Ascending aorta (tissue), 2 donors: ENCODE measurements at regions of chr19 and their contacts with region 1.

Region 1: GRCh38 chr19:55516878-55517620 is 19.9 kb downstream of the SBK2 start:
- DNase-seq: peak; percentile 47 to 96
- H3K4me3 ChIP-seq: peak overlapping the region; percentile 49 to 57
- H3K27ac ChIP-seq: peak overlapping the region; percentile 36 to 74
- H3K4me1 ChIP-seq: peaks cover 0 to 12% of the 10 kb centered on the region in 2 donors
- H3K27me3 ChIP-seq: no peaks in the 10 kb centered on the region
- CTCF ChIP-seq: peak; percentile 83 to 95 (median 95)

Region 2: GRCh38 chr19:55549500-55550320 is 32.7 kb after region 1 on chr19:
- intact Hi-C with region 1: loop called (anchors 1 kb)
- DNase-seq: peak in 1 of 2 donors; percentile 77
- H3K4me3 ChIP-seq: peak overlapping the region; percentile 30 to 45
- H3K27ac ChIP-seq: peak overlapping the region; percentile 61 to 70
- H3K4me1 ChIP-seq: peaks cover 5 to 33% of the 10 kb centered on the region in 2 donors
- H3K27me3 ChIP-seq: no peaks in the 10 kb centered on the region
- CTCF ChIP-seq: no peak

Region 3: DNA sequence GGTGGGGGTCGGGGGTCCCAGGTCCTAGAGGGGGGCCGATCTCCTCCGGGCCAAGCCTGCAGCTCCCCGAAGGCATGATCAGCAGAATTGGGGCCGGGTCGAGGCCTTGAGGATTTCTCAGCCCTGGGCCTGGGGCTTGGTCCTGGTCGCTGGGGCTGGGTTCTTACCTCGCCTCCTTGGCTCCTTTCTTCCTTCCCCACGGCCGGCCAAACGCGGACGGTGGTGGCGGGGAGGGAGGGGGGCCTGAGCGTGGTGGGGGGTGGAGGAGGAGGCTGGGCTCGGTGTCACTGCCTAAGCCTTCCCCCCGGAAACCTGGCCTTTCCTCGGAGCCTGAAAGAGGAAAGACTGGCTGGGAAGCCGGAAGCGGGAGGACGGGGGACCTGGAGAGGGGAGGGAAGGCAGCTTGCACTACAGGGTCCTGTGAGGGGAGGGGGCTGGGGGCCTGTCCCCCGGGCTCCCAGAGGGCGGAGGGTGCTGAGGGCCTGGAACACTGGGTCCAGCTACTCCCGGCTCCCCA is 63.6 kb after region 1 on chr19 and contains the start of gene ZNF579:
- intact Hi-C with region 1: loop called (anchors 1 kb)
- DNase-seq: peak; percentile 32 to 89
- H3K4me3 ChIP-seq: peak within 1 kb of the TSS; percentile 67 to 85
- H3K27ac ChIP-seq: peak within 1 kb of the TSS; percentile 89 to 92
- H3K4me1 ChIP-seq: peaks cover 2 to 8% of the 10 kb centered on the region in 2 donors
- H3K27me3 ChIP-seq: no peaks in the 10 kb centered on the region
- CTCF ChIP-seq: no peak
- total RNA-seq, gene ZNF579: 14.2 TPM

Region 4: GRCh38 chr19:55605207-55605636 is 88.2 kb after region 1 on chr19:
- intact Hi-C with region 1: loop called (anchors 1 kb)
- DNase-seq: peak; percentile 89 to 98
- H3K4me3 ChIP-seq: peak overlapping the region; percentile 91 to 93
- H3K27ac ChIP-seq: peak overlapping the region; percentile 92 to 98
- H3K4me1 ChIP-seq: peaks cover 3 to 13% of the 10 kb centered on the region in 2 donors
- H3K27me3 ChIP-seq: no peaks in the 10 kb centered on the region
- CTCF ChIP-seq: no peak

Region 5: GRCh38 chr19:55624109-55625003 is 107.3 kb after region 1 on chr19 and contains the start of gene ZNF784:
- intact Hi-C with region 1: loop called (anchors 2 kb)
- DNase-seq: peak; percentile 67 to 95
- H3K4me3 ChIP-seq: peak within 1 kb of the TSS; percentile 60 to 73
- H3K27ac ChIP-seq: peak within 1 kb of the TSS; percentile 96 to 97
- H3K4me1 ChIP-seq: peaks cover 0 to 5% of the 10 kb centered on the region in 2 donors
- H3K27me3 ChIP-seq: no peaks in the 10 kb centered on the region
- CTCF ChIP-seq: no peak
- total RNA-seq, gene ZNF784: 14.7 TPM

Region 6: DNA sequence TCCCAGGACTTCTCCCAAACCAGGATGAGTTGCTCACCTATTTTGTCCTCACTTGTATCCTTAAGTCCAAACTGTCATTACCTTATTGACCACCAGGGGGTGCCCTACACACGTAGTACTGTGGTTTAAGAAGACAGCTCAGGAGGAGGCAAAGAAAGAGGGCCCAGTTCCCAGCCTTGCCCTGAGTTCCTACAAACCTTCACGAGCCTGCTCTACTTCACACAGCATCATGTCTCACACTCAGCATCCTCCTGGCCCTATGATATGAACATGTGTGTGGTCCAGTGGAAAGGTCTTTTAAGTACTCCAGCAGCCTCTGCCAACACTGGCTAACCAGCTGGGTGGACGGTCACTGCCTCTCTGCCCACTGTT is 115.4 kb after region 1 on chr19:
- intact Hi-C with region 1: loop called (anchors 2 kb)
- DNase-seq: peak; percentile 59 to 98
- H3K4me3 ChIP-seq: no peak overlapping the region
- H3K27ac ChIP-seq: peak overlapping the region in 1 of 2 donors; percentile 44
- H3K4me1 ChIP-seq: peaks cover 11 to 19% of the 10 kb centered on the region in 2 donors
- H3K27me3 ChIP-seq: no peaks in the 10 kb centered on the region
- CTCF ChIP-seq: peak; percentile 82 to 90 (median 83)